Heart right ventricle (tissue), 16 donors: ENCODE measurements at regions of chr5 and their contacts with region 1.

Region 1: DNA sequence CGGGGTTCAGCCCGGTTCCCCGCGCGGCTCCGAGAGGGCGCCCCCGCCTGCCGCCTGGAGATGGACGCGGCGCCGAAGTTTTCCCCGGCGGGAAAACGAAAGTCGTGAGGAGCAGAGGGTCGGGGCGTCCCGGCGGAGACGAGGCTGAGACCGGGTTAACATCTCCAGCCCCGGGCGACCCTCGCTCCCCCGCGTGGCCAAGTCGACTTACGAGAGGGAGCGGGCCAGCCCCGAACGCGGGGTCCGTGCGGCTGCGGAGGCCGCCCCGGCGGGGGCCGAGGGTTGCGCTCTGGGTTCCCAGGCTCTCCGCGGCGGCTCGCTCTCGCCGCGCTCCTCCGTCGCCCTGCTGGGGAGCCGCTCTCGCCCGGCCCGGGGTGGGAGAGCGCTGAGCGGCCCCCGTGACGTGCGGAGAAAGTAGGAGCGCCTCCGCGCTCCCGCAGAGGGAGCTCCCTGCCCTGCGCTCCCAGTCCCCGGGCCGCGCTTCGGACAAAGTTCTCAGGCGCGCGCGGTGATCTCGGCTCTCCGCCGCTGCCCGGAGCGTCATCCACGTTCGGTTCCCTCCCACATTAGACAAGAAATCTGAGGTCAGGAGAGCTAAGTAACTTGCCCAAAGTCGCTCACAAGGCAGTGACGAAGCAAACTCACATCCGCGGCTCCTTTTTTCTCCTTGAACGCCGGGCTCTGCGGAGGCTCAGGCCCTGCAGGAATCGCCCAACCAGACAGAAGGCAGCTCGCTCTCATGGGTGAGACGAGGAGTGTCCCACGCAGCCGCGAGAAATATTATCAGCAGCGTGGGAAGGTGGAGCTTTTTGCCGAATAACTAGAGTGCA is 1.2 kb upstream of the GCNT4 start:
- DNase-seq: peak; percentile 39 to 46
- ATAC-seq: peak; percentile 62 to 75 (median 72)
- H3K4me3 ChIP-seq: peak overlapping the region; percentile 54 to 88 (median 80)
- H3K27ac ChIP-seq: peak overlapping the region; percentile 44 to 92 (median 85)
- H3K4me1 ChIP-seq: peaks cover 0 to 35% (median 21%) of the 10 kb centered on the region in 9 donors
- H3K27me3 ChIP-seq: peaks cover 0 to 52% (median 0%) of the 10 kb centered on the region in 7 donors
- CTCF ChIP-seq: peak in 3 of 9 donors; percentile 5 to 17 (median 16)

Region 2: DNA sequence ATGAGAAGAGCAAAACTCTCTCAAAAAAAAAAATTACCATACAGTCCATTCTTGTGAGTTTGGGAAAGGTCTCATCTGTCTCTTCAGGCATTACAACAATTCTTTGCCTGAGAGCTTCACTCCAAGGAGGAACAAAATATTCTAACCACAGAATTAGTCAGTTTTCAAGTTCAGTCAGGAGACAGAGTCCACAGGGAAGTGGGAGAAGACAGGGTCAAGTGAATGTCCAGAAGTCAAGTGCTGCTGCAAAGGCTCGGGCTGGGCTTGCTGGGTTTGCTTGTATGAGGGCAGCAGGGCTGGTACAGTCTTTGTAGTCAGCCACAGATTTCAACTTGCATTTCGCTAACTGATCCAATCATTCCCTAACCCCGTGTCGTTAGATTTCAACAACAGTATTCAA is 386.1 kb before region 1 on chr5:
- intact Hi-C with region 1: loop called in 1 of 10 experiments (anchors 10 kb)
- DNase-seq: no peak
- ATAC-seq: no peak
- H3K4me3 ChIP-seq: no peak overlapping the region
- H3K27ac ChIP-seq: no peak overlapping the region
- H3K4me1 ChIP-seq: peaks cover 0 to 18% (median 4%) of the 10 kb centered on the region in 9 donors
- H3K27me3 ChIP-seq: no peaks in the 10 kb centered on the region
- CTCF ChIP-seq: no peak

Region 3: GRCh38 chr5:75265731-75266130 is 212.2 kb after region 1 on chr5:
- intact Hi-C with region 1: loop called in 1 of 10 experiments (anchors 10 kb)
- DNase-seq: no peak
- ATAC-seq: no peak
- H3K4me3 ChIP-seq: no peak overlapping the region
- H3K27ac ChIP-seq: no peak overlapping the region
- H3K4me1 ChIP-seq: no peaks in the 10 kb centered on the region
- H3K27me3 ChIP-seq: peaks cover 0 to 15% (median 7%) of the 10 kb centered on the region in 7 donors
- CTCF ChIP-seq: peak in 7 of 9 donors; percentile 33 to 58 (median 40)

Region 4: GRCh38 chr5:75336625-75337339 is 283.3 kb after region 1 on chr5 and contains the start of gene HMGCR:
- intact Hi-C with region 1: loop called in 3 of 10 experiments (anchors 5 to 10 kb)
- DNase-seq: peak; percentile 97 to 99
- ATAC-seq: peak; percentile 99 to 100 (median 99)
- H3K4me3 ChIP-seq: peak within 1 kb of the TSS; percentile 72 to 99 (median 90)
- H3K27ac ChIP-seq: peak within 1 kb of the TSS; percentile 37 to 95 (median 90)
- H3K4me1 ChIP-seq: peaks cover 2 to 28% (median 18%) of the 10 kb centered on the region in 9 donors
- H3K27me3 ChIP-seq: no peaks in the 10 kb centered on the region
- CTCF ChIP-seq: peak in 5 of 9 donors; percentile 5 to 53 (median 41)
- total RNA-seq, gene HMGCR: 9.8 to 16.3 (median 11.4) TPM

Region 5: GRCh38 chr5:75681125-75681830 is 627.8 kb after region 1 on chr5:
- intact Hi-C with region 1: loop called in 1 of 10 experiments (anchors 10 kb)
- DNase-seq: no peak
- ATAC-seq: peak in 2 of 8 donors; percentile 16 to 37
- H3K4me3 ChIP-seq: no peak overlapping the region
- H3K27ac ChIP-seq: peak overlapping the region in 1 of 10 donors; percentile 1
- H3K4me1 ChIP-seq: peaks cover 0 to 12% (median 0%) of the 10 kb centered on the region in 9 donors
- H3K27me3 ChIP-seq: no peaks in the 10 kb centered on the region
- CTCF ChIP-seq: peak; percentile 60 to 89 (median 78)